ENCODE measurements at regions of chr7 and their contacts with region 1.

Region 1: DNA sequence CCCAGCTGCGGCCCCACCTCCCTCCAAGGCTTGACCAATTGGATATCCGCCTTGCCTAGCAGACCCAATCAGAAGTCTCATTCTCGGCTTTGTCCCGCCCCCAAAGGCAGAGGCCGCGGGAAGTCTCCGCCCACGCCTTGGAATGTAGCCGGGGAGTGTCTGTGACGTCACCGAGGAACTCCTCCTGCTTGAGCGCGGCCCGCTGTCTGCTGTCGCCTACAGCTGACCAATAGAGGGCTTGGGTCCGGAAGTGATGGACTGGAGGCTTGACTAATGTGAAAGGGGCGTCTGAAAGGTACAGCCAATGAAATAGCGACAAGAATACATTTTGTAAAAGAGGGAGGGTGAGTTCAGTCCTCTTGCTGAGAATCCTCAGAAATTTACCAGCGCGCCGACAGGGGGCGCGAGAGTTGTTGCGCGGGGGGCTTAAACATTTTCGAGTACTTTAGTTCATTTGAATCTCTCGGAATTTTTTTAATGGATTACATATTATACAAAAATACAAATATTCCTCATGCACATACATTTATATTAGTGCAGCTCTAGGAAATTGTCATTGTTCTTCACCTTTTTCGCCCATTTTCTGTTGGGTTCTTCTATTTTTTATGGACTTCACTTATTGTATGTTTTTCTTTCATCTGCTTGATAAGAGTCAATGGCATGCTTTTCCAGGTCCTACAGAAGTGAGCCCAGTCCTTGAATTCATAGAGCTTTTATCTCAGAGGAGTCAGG is 376 bp upstream of the CREB3L2 start:
- DNase-seq: peak; percentile 99
- H3K4me3 ChIP-seq: peak overlapping the region; percentile 80
- H3K27ac ChIP-seq: no peak overlapping the region
- H3K4me1 ChIP-seq: peaks cover 33% of the 10 kb centered on the region
- CTCF ChIP-seq: peak; percentile 96

Region 2: DNA sequence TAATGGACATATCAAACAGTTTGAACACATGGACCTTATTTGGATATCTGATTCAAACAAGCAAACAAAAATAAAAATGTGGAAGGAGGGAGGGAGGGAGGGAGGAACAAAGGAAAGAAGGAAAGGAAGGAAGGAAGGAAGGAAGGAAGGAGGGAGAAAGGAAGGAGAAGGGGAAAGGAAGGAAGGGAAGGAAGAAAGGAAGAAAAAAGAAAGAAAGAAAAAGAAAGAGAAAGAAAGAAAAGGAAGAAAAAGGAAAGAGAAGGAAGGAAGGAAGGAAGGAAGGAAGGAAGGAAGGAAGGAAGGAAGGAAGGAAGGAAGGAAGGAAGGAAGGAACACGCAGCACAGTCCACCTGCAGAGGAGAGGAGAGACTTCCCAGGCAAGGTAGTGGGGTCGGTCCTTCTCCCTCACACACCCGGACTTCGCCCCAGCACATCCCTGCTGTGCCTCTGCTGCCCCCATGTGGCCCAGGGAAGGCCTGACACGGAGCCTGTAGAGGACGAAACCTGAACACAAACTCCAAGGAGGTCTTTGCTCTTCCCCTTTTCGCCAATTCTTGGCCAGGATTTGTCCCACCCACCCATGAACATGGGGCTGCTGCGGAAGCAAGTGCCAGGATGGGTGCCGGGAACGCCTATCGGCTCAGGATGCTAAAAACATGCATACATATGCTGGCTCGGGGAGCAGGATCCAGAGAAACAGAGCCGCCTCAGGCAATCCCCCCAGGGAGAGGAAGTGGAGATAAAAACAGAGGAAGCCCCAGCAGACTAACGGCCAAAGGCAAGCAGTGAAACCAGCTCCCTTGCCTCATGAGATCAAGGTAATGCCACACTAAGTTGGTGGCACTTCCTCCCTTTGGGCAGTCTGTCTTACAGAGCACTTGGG is 103.2 kb before region 1 on chr7:
- CTCF ChIA-PET with region 1: interaction called, 5 read pairs
- POLR2A ChIA-PET with region 1: interaction called, 15 read pairs
- intact Hi-C with region 1: loop called (anchors 1 kb)
- DNase-seq: peak; percentile 75
- H3K4me3 ChIP-seq: peak overlapping the region; percentile 22
- H3K27ac ChIP-seq: peak overlapping the region; percentile 37
- H3K4me1 ChIP-seq: peaks cover 20% of the 10 kb centered on the region
- CTCF ChIP-seq: peak; percentile 88

Region 3: GRCh38 chr7:137975221-137975620 is 27.0 kb before region 1 on chr7:
- CTCF ChIA-PET with region 1: no interaction called
- POLR2A ChIA-PET with region 1: interaction called, 65 read pairs
- intact Hi-C with region 1: no loop called
- DNase-seq: no peak
- H3K4me3 ChIP-seq: no peak overlapping the region
- H3K27ac ChIP-seq: no peak overlapping the region
- H3K4me1 ChIP-seq: peaks cover under 1% of the 10 kb centered on the region
- CTCF ChIP-seq: no peak

Region 4: DNA sequence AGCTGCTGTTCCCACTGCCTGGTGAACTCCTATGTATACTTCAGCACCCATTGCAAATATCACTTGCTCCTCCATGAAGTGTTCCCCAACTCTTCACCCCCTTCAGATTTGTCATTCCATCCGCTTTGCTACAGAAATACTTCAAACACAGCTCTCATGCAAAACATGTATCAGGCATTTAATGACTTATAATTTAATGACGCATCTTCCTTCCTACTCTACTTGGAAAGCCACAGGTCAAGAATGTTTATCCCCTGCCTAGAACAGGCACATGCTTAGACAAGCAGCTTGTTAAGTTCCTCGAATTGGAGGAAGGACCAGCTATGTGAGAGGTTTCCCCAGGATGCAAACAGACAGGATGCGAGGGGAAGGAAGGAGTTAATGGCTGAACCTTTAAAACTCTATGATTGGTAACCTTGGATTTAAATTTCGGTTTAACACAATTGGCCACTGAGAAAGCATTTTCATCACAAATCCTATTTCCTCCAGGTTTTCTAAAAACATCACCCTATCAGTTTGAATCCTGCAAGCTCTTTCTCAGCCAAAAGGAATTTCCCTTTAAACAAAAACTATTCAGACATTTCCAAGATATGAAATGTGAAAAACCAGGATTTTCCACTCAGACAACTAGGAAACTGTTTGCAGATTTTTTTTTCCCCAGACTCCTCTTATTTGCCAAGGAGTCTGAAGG is 11.9 kb before region 1 on chr7:
- CTCF ChIA-PET with region 1: interaction called, 8 read pairs
- POLR2A ChIA-PET with region 1: interaction called, 36 read pairs
- intact Hi-C with region 1: loop called (anchors 1 kb)
- DNase-seq: no peak
- H3K4me3 ChIP-seq: no peak overlapping the region
- H3K27ac ChIP-seq: peak overlapping the region; percentile 1
- H3K4me1 ChIP-seq: peaks cover 69% of the 10 kb centered on the region
- CTCF ChIP-seq: no peak

Region 5: GRCh38 chr7:138459413-138460175 is 457.3 kb after region 1 on chr7:
- CTCF ChIA-PET with region 1: no interaction called
- POLR2A ChIA-PET with region 1: no interaction called
- intact Hi-C with region 1: loop called (anchors 1 kb)
- DNase-seq: no peak
- H3K4me3 ChIP-seq: peak overlapping the region; percentile 67
- H3K27ac ChIP-seq: peak overlapping the region; percentile 26
- H3K4me1 ChIP-seq: peaks cover 7% of the 10 kb centered on the region
- CTCF ChIP-seq: 0 out of 2 replicates have a peak, but pooled peaks have one; percentile 20